ENCODE measurements at regions of chr13 and their contacts with region 1.

Region 1: GRCh38 chr13:49278211-49278610 is 30.5 kb downstream of the CDADC1 start:
- DNase-seq: no peak
- ATAC-seq: no peak
- H3K4me3 Mint-ChIP-seq: no peak overlapping the region
- H3K27ac Mint-ChIP-seq: no peak overlapping the region
- H3K4me1 Mint-ChIP-seq: no peaks in the 10 kb centered on the region
- H3K27me3 Mint-ChIP-seq: no peaks in the 10 kb centered on the region
- CTCF ChIP-seq: no peak

Region 2: GRCh38 chr13:49214917-49215376 is 63.3 kb before region 1 on chr13:
- CTCF ChIA-PET with region 1: interaction called, 8 read pairs
- POLR2A ChIA-PET with region 1: no interaction called
- intact Hi-C with region 1: loop called (anchors 2 kb)
- DNase-seq: no peak
- ATAC-seq: peak; percentile 71
- H3K4me3 Mint-ChIP-seq: no peak overlapping the region
- H3K27ac Mint-ChIP-seq: peak overlapping the region; percentile 59
- H3K4me1 Mint-ChIP-seq: peaks cover 41% of the 10 kb centered on the region
- H3K27me3 Mint-ChIP-seq: peaks cover 28% of the 10 kb centered on the region
- CTCF ChIP-seq: no peak

Region 3: GRCh38 chr13:49240017-49240416 is 38.2 kb before region 1 on chr13:
- CTCF ChIA-PET with region 1: interaction called, 15 read pairs
- POLR2A ChIA-PET with region 1: interaction called, 3 read pairs
- intact Hi-C with region 1: loop called (anchors 1 kb)
- DNase-seq: no peak
- ATAC-seq: peak; percentile 49
- H3K4me3 Mint-ChIP-seq: no peak overlapping the region
- H3K27ac Mint-ChIP-seq: no peak overlapping the region
- H3K4me1 Mint-ChIP-seq: no peaks in the 10 kb centered on the region
- H3K27me3 Mint-ChIP-seq: peaks cover 6% of the 10 kb centered on the region
- CTCF ChIP-seq: no peak

Region 4: DNA sequence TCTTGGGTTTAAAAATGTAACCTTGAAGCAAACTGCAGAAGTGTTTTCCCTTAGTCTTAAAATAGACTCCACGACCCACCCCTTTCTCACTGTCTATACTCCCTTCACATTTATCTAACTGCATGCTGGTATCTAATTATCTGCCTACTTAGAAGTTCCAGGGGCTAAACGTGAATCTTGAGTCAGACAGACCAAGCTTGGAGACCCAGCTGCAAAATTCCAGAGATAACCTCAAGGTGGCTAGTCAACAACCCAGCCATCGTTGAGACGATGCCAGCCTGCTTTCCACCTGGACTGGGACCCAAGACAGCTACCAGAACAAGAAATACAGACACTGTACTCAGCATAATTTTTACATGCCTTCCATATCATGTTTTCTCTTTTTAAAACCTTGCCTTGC is 51.6 kb after region 1 on chr13:
- CTCF ChIA-PET with region 1: no interaction called
- POLR2A ChIA-PET with region 1: no interaction called
- intact Hi-C with region 1: no loop called
- DNase-seq: no peak
- ATAC-seq: no peak
- H3K4me3 Mint-ChIP-seq: no peak overlapping the region
- H3K27ac Mint-ChIP-seq: no peak overlapping the region
- H3K4me1 Mint-ChIP-seq: peaks cover 1% of the 10 kb centered on the region
- H3K27me3 Mint-ChIP-seq: no peaks in the 10 kb centered on the region
- CTCF ChIP-seq: no peak

Measured in activated B cell treated with CpG ODN at 0.5 μM for 24 hours (primary cell).